Prostate gland (tissue), 2 donors: ENCODE measurements at regions of chr10 and their contacts with region 1.

Region 1: GRCh38 chr10:123891133-123892071 is at the start of gene CPXM2:
- DNase-seq: no peak
- H3K4me3 ChIP-seq: peak within 1 kb of the TSS; percentile 19 to 20
- H3K27ac ChIP-seq: peak within 1 kb of the TSS; percentile 55 to 65
- H3K4me1 ChIP-seq: no peaks in the 10 kb centered on the region
- H3K27me3 ChIP-seq: no peaks in the 10 kb centered on the region
- CTCF ChIP-seq: no peak
- POLR2A ChIP-seq: no peak
- total RNA-seq, gene CPXM2: 5.4 to 27.4 TPM

Region 2: GRCh38 chr10:123062726-123063125 is 828.7 kb before region 1 on chr10:
- intact Hi-C with region 1: no loop called
- DNase-seq: no peak
- H3K4me3 ChIP-seq: no peak overlapping the region
- H3K27ac ChIP-seq: no peak overlapping the region
- H3K4me1 ChIP-seq: no peaks in the 10 kb centered on the region
- H3K27me3 ChIP-seq: no peaks in the 10 kb centered on the region
- CTCF ChIP-seq: no peak
- POLR2A ChIP-seq: no peak

Region 3: GRCh38 chr10:123967396-123968243 is 76.2 kb after region 1 on chr10:
- intact Hi-C with region 1: loop called (anchors 5 kb)
- DNase-seq: peak; percentile 64
- H3K4me3 ChIP-seq: no peak overlapping the region
- H3K27ac ChIP-seq: no peak overlapping the region
- H3K4me1 ChIP-seq: peaks cover 4% of the 10 kb centered on the region
- H3K27me3 ChIP-seq: peaks cover 20% of the 10 kb centered on the region
- CTCF ChIP-seq: peak; percentile 86 to 94 (median 90)
- POLR2A ChIP-seq: no peak